H1 (cell line): ENCODE measurements at regions of chr12 and their contacts with region 1.

Region 1: DNA sequence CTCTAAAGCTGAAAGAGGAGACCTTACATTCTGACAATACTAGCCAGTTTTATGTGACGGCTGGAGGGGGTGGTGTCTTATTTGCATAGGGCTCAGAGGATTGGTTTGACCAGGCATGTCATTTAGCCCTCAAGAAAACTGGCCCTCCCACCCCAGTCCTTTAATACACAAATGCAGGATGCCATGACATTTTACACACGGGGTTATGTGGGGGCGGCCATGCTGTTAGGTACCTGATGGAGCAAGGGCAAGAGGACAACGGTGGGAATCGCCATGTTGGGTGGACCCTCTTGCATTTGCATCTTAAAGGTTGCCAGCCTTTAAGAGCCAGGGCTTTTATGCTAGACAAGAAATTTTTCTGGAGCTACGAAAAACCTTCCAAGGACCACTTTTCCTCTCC is 23.3 kb downstream of the MDM2 start:
- DNase-seq: no peak
- H3K4me3 ChIP-seq: no peak overlapping the region
- H3K27ac ChIP-seq: no peak overlapping the region
- H3K4me1 ChIP-seq: peaks cover 0 to 7% (median 3%) of the 10 kb centered on the region in 4 experiments; a peak in 2 of 7 replicates
- H3K27me3 ChIP-seq: no peaks in the 10 kb centered on the region
- CTCF ChIP-seq: no peak
- EP300 ChIP-seq: no peak
- POLR2A ChIP-seq: no peak; a peak in 2 of 3 replicates
- RAD21 ChIP-seq: no peak

Region 2: GRCh38 chr12:68608191-68608590 is 223.1 kb before region 1 on chr12:
- CTCF ChIA-PET with region 1: no interaction called
- POLR2A ChIA-PET with region 1: no interaction called
- DNase-seq: no peak
- H3K4me3 ChIP-seq: no peak overlapping the region
- H3K27ac ChIP-seq: no peak overlapping the region
- H3K4me1 ChIP-seq: peaks cover 0 to 12% (median 4%) of the 10 kb centered on the region in 4 experiments; a peak in 5 of 7 replicates
- H3K27me3 ChIP-seq: no peaks in the 10 kb centered on the region
- CTCF ChIP-seq: no peak
- EP300 ChIP-seq: no peak
- POLR2A ChIP-seq: no peak
- RAD21 ChIP-seq: no peak

Region 3: DNA sequence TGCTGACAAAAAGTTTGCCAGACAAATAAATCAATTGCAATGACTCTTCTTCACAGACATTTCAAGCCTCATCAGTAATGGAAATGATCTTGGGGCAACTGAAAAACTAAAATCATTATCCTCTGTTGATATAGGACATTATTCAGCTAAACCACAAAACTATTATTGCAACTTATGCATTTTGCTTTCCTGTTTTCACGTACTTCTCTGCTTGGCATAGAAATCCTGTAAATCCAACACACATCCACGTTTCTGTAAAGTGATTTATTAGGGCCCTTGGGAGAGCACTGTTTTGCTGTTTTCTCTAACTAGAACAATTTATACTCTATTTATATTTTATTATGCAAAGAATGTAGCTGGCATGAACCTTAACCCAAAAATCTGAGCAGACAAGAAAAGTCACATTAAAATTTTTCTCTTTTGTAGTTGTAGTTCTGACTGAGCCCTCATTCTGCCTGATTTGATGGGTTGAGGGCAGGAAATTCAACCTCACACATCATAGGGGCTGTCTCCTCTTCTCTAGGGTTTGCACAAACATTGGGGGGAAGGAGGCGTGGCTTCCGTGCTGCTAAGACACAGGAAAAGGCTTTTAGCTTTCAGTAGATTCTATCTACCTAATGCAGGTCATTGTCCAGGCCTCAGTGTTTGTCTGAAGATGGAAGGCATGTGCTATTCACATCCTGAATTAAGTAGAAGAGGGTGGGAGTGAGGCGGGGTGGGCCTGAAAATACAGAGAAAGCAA is 156.0 kb before region 1 on chr12:
- CTCF ChIA-PET with region 1: no interaction called
- POLR2A ChIA-PET with region 1: no interaction called
- DNase-seq: no peak
- H3K4me3 ChIP-seq: no peak overlapping the region
- H3K27ac ChIP-seq: no peak overlapping the region
- H3K4me1 ChIP-seq: no peaks in the 10 kb centered on the region
- H3K27me3 ChIP-seq: no peaks in the 10 kb centered on the region
- CTCF ChIP-seq: no peak
- EP300 ChIP-seq: no peak
- POLR2A ChIP-seq: no peak
- RAD21 ChIP-seq: no peak

Region 4: GRCh38 chr12:68815232-68815927 is 15.9 kb before region 1 on chr12:
- CTCF ChIA-PET with region 1: interaction called, 29 read pairs
- POLR2A ChIA-PET with region 1: interaction called, 23 read pairs
- DNase-seq: no peak
- H3K4me3 ChIP-seq: no peak overlapping the region
- H3K27ac ChIP-seq: no peak overlapping the region
- H3K4me1 ChIP-seq: no peaks in the 10 kb centered on the region
- H3K27me3 ChIP-seq: no peaks in the 10 kb centered on the region
- CTCF ChIP-seq: no peak
- EP300 ChIP-seq: no peak
- POLR2A ChIP-seq: no peak
- RAD21 ChIP-seq: no peak

Region 5: GRCh38 chr12:68844788-68845695 is 13.8 kb after region 1 on chr12:
- CTCF ChIA-PET with region 1: interaction called, 33 read pairs
- POLR2A ChIA-PET with region 1: interaction called, 18 read pairs
- DNase-seq: no peak
- H3K4me3 ChIP-seq: no peak overlapping the region
- H3K27ac ChIP-seq: no peak overlapping the region
- H3K4me1 ChIP-seq: no peaks in the 10 kb centered on the region
- H3K27me3 ChIP-seq: no peaks in the 10 kb centered on the region
- CTCF ChIP-seq: no peak
- EP300 ChIP-seq: no peak
- POLR2A ChIP-seq: 0 out of 3 replicates have a peak, but pooled peaks of 1 of the 2 experiments have one; percentile 2
- RAD21 ChIP-seq: no peak